ENCODE measurements at regions of chr1 and their contacts with region 1.

Region 1: GRCh38 chr1:229558571-229559335 is at the start of gene ABCB10:
- DNase-seq: peak; percentile 97
- H3K4me3 ChIP-seq: peak within 1 kb of the TSS; percentile 63 to 84 (median 68)
- H3K27ac ChIP-seq: peak within 1 kb of the TSS; percentile 57 to 81 (median 63)
- H3K4me1 ChIP-seq: peaks cover 22 to 35% of the 10 kb centered on the region in 2 donors
- H3K27me3 ChIP-seq: no peaks in the 10 kb centered on the region
- CTCF ChIP-seq: peak; percentile 45 to 90 (median 78)
- POLR2A ChIP-seq: peak in 1 of 2 donors; percentile 65
- total RNA-seq, gene ABCB10: 13.7 to 22.6 (median 17.8) TPM

Region 2: GRCh38 chr1:229625915-229626831 is 67.4 kb after region 1 on chr1 and contains the starts of genes TAF5L and URB2:
- intact Hi-C with region 1: loop called (anchors 5 kb)
- DNase-seq: peak; percentile 87 to 89
- H3K4me3 ChIP-seq: peak within 1 kb of the TSS; percentile 64 to 89 (median 80)
- H3K27ac ChIP-seq: peak within 1 kb of the TSS in 2 of 3 donors; percentile 30 to 83
- H3K4me1 ChIP-seq: peaks cover 12 to 19% of the 10 kb centered on the region in 2 donors
- H3K27me3 ChIP-seq: no peaks in the 10 kb centered on the region
- CTCF ChIP-seq: no peak
- POLR2A ChIP-seq: peak in 1 of 2 donors; percentile 52
- total RNA-seq, gene TAF5L: 14.9 to 26.1 (median 18.4) TPM
- total RNA-seq, gene URB2: 6.4 to 14.9 (median 7.1) TPM

Measured in thyroid gland (tissue), 4 donors.